ENCODE measurements at regions of chr16 and their contacts with region 1.

Region 1: DNA sequence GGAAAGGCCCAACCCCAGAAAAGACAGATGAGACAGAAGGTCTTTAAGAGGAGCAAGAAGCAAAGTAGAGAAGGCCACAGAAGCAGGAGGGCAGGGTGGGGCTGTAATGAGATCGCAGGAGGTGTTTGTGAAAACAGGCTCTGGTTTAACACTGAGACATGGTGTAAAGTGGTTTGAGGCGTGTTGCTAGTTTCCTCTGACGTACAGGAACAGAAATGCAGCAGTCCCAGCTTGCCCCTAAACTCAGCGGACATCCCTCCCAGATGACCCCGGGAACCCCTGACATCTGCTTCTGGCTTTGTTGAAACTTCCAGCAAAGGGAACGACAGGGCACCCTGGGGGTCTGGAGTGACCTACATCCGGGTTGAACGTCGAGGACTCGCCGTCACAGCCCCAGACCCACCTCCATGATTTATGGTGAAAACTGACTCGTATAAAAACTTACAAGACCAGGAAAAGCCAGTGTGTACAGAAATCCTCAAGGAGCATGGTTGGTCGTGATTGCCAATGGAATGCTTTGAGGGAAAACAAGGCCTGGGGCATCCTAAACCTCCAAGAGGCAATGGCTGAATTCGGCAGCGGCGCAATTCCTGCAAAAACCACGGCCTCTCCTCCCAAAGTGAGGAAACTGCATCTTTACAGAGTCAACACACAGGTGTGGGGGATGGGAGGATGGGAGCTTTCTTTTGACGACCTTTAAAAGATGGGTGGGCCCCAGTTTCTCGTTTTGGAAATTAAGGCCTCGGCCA is 25.8 kb downstream of the LITAF start:
- DNase-seq: peak; percentile 41 to 92 (median 89)
- ATAC-seq: peak; percentile 92
- H3K4me3 ChIP-seq: peak overlapping the region; percentile 56
- H3K4me3 Mint-ChIP-seq: peak overlapping the region; percentile 79 to 97 (median 84)
- H3K27ac ChIP-seq: peak overlapping the region; percentile 89
- H3K27ac Mint-ChIP-seq: peak overlapping the region; percentile 92 to 99 (median 99)
- H3K4me1 ChIP-seq: peaks cover 70 to 85% of the 10 kb centered on the region in 2 donors
- H3K4me1 Mint-ChIP-seq: peaks cover 43 to 92% (median 78%) of the 10 kb centered on the region in 7 donors
- H3K27me3 ChIP-seq: no peaks in the 10 kb centered on the region
- H3K27me3 Mint-ChIP-seq: peaks cover 0 to 2% (median 0%) of the 10 kb centered on the region in 5 donors

Region 2: DNA sequence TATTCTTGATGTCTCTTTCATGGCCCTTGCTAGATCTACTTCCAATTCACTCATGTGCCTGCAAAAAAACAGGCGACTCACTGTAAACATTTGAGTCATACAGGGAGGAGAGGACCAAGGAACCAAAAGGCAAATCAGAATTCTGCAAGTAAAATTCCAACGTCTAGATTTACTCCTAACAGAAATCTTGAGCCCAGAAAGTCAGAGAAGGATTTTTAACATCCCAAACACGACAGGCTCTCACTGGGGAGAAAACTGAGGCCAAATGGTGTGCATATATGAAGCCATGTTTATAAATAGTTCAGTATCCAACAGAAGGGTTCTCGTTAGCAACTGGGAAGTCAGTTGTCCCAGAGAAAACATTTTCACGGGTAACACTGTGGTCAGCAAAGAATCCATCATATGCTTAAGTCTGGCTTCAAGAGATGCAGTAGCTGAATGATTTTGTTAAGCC is 14.2 kb before region 1 on chr16:
- CTCF ChIA-PET with region 1: interaction called, 3 read pairs
- POLR2A ChIA-PET with region 1: interaction called, 4 read pairs
- intact Hi-C with region 1: loop called in 1 of 2 experiments (anchors 2 kb)
- DNase-seq: no peak
- ATAC-seq: no peak
- H3K4me3 ChIP-seq: no peak overlapping the region
- H3K4me3 Mint-ChIP-seq: no peak overlapping the region
- H3K27ac ChIP-seq: no peak overlapping the region
- H3K27ac Mint-ChIP-seq: peak overlapping the region; percentile 20 to 83 (median 64)
- H3K4me1 ChIP-seq: no peaks in the 10 kb centered on the region
- H3K4me1 Mint-ChIP-seq: peaks cover 5 to 37% (median 17%) of the 10 kb centered on the region in 7 donors
- H3K27me3 ChIP-seq: no peaks in the 10 kb centered on the region
- H3K27me3 Mint-ChIP-seq: no peaks in the 10 kb centered on the region

Region 3: GRCh38 chr16:11586856-11587642 is 26.2 kb after region 1 on chr16 and contains the start of gene LITAF:
- CTCF ChIA-PET with region 1: interaction called, 5 read pairs
- POLR2A ChIA-PET with region 1: interaction called, 32 read pairs
- intact Hi-C with region 1: loop called (anchors 1 kb)
- DNase-seq: peak in 8 of 9 donors; percentile 52 to 75 (median 57)
- ATAC-seq: peak; percentile 71
- H3K4me3 ChIP-seq: peak within 1 kb of the TSS; percentile 88
- H3K4me3 Mint-ChIP-seq: peak within 1 kb of the TSS; percentile 91 to 100 (median 96)
- H3K27ac ChIP-seq: peak within 1 kb of the TSS; percentile 94
- H3K27ac Mint-ChIP-seq: peak within 1 kb of the TSS; percentile 90 to 99 (median 97)
- H3K4me1 ChIP-seq: peaks cover 32 to 38% of the 10 kb centered on the region in 2 donors
- H3K4me1 Mint-ChIP-seq: peaks cover 29 to 45% (median 37%) of the 10 kb centered on the region in 7 donors
- H3K27me3 ChIP-seq: no peaks in the 10 kb centered on the region
- H3K27me3 Mint-ChIP-seq: peaks cover 0 to 7% (median 0%) of the 10 kb centered on the region in 5 donors
- total RNA-seq, gene LITAF: 126 to 278 (median 208) TPM

Region 4: GRCh38 chr16:11619327-11619851 is 58.5 kb after region 1 on chr16:
- CTCF ChIA-PET with region 1: interaction called, 3 read pairs
- POLR2A ChIA-PET with region 1: interaction called, 28 read pairs
- intact Hi-C with region 1: loop called in 1 of 2 experiments (anchors 1 kb)
- DNase-seq: peak in 5 of 9 donors; percentile 39 to 54 (median 52)
- ATAC-seq: peak; percentile 75
- H3K4me3 ChIP-seq: peak overlapping the region; percentile 47
- H3K4me3 Mint-ChIP-seq: peak overlapping the region; percentile 68 to 95 (median 76)
- H3K27ac ChIP-seq: peak overlapping the region; percentile 77
- H3K27ac Mint-ChIP-seq: peak overlapping the region; percentile 76 to 100 (median 98)
- H3K4me1 ChIP-seq: peaks cover 52 to 71% of the 10 kb centered on the region in 2 donors
- H3K4me1 Mint-ChIP-seq: peaks cover 52 to 92% (median 60%) of the 10 kb centered on the region in 7 donors
- H3K27me3 ChIP-seq: no peaks in the 10 kb centered on the region
- H3K27me3 Mint-ChIP-seq: no peaks in the 10 kb centered on the region

Measured in naive thymus-derived CD4-positive, alpha-beta T cell (primary cell).